Activated CD8-positive, alpha-beta T cell treated with anti-CD3 and anti-CD28 coated beads for 36 hours (primary cell): ENCODE measurements at regions of chr4 and their contacts with region 1.

Region 1: GRCh38 chr4:6873792-6874461 is 35.7 kb upstream of the TBC1D14 start:
- DNase-seq: peak; percentile 90
- ATAC-seq: peak; percentile 94
- H3K4me3 Mint-ChIP-seq: no peak overlapping the region
- H3K27ac Mint-ChIP-seq: peak overlapping the region; percentile 46
- H3K4me1 Mint-ChIP-seq: no peaks in the 10 kb centered on the region
- H3K27me3 Mint-ChIP-seq: no peaks in the 10 kb centered on the region
- CTCF ChIP-seq: peak; percentile 87

Region 2: GRCh38 chr4:6673660-6674499 is 200.0 kb before region 1 on chr4:
- CTCF ChIA-PET with region 1: interaction called, 39 read pairs
- POLR2A ChIA-PET with region 1: interaction called, 3 read pairs
- intact Hi-C with region 1: no loop called
- DNase-seq: peak; percentile 95
- ATAC-seq: peak; percentile 81
- H3K4me3 Mint-ChIP-seq: peak overlapping the region; percentile 90
- H3K27ac Mint-ChIP-seq: peak overlapping the region; percentile 99
- H3K4me1 Mint-ChIP-seq: peaks cover 42% of the 10 kb centered on the region
- H3K27me3 Mint-ChIP-seq: no peaks in the 10 kb centered on the region
- CTCF ChIP-seq: no peak

Region 3: GRCh38 chr4:6727081-6727942 is 146.6 kb before region 1 on chr4:
- CTCF ChIA-PET with region 1: interaction called, 205 read pairs
- POLR2A ChIA-PET with region 1: no interaction called
- intact Hi-C with region 1: loop called (anchors 2 kb)
- DNase-seq: no peak
- ATAC-seq: no peak
- H3K4me3 Mint-ChIP-seq: no peak overlapping the region
- H3K27ac Mint-ChIP-seq: peak overlapping the region; percentile 28
- H3K4me1 Mint-ChIP-seq: peaks cover 5% of the 10 kb centered on the region
- H3K27me3 Mint-ChIP-seq: no peaks in the 10 kb centered on the region
- CTCF ChIP-seq: no peak

Region 4: GRCh38 chr4:6768539-6768905 is 105.4 kb before region 1 on chr4:
- CTCF ChIA-PET with region 1: interaction called, 13 read pairs
- POLR2A ChIA-PET with region 1: no interaction called
- intact Hi-C with region 1: no loop called
- DNase-seq: no peak
- ATAC-seq: no peak
- H3K4me3 Mint-ChIP-seq: no peak overlapping the region
- H3K27ac Mint-ChIP-seq: peak overlapping the region; percentile 41
- H3K4me1 Mint-ChIP-seq: peaks cover 30% of the 10 kb centered on the region
- H3K27me3 Mint-ChIP-seq: no peaks in the 10 kb centered on the region
- CTCF ChIP-seq: no peak

Region 5: GRCh38 chr4:6806924-6807636 is 66.8 kb before region 1 on chr4:
- CTCF ChIA-PET with region 1: interaction called, 11 read pairs
- POLR2A ChIA-PET with region 1: no interaction called
- intact Hi-C with region 1: no loop called
- DNase-seq: no peak
- ATAC-seq: no peak
- H3K4me3 Mint-ChIP-seq: no peak overlapping the region
- H3K27ac Mint-ChIP-seq: no peak overlapping the region
- H3K4me1 Mint-ChIP-seq: peaks cover 24% of the 10 kb centered on the region
- H3K27me3 Mint-ChIP-seq: no peaks in the 10 kb centered on the region
- CTCF ChIP-seq: no peak

Region 6: DNA sequence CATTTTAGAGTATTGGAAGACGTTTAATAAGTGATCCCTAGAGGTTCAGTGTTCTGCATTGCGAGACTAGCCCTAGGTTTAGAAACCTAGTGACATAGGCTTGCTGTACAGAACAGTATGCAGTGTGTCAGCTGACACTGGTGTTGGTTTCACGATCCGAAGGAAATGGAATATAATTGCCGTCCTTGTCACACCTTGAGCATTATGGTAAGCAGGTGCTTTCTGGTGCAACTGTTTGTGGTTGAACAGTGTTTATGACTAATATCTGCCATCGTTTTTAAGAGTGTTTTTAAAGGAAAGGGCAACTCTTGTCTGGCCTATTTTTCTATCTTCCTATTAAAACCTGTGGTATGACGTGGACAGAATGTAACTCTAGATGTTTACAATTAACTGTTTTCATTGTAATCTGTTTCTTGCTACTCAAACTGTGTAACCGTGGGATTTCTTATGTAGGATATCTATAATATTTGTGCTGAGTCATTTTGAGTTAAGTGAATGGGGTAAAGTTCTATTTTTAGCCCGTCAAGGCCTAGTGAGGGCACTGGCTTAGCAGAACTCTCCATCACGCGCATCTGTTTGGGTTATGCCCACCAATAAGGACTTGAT is 18.1 kb before region 1 on chr4:
- CTCF ChIA-PET with region 1: interaction called, 21 read pairs
- POLR2A ChIA-PET with region 1: interaction called, 3 read pairs
- intact Hi-C with region 1: no loop called
- DNase-seq: peak; percentile 64
- ATAC-seq: peak; percentile 97
- H3K4me3 Mint-ChIP-seq: peak overlapping the region; percentile 25
- H3K27ac Mint-ChIP-seq: peak overlapping the region; percentile 92
- H3K4me1 Mint-ChIP-seq: peaks cover 29% of the 10 kb centered on the region
- H3K27me3 Mint-ChIP-seq: no peaks in the 10 kb centered on the region
- CTCF ChIP-seq: no peak

Region 7: DNA sequence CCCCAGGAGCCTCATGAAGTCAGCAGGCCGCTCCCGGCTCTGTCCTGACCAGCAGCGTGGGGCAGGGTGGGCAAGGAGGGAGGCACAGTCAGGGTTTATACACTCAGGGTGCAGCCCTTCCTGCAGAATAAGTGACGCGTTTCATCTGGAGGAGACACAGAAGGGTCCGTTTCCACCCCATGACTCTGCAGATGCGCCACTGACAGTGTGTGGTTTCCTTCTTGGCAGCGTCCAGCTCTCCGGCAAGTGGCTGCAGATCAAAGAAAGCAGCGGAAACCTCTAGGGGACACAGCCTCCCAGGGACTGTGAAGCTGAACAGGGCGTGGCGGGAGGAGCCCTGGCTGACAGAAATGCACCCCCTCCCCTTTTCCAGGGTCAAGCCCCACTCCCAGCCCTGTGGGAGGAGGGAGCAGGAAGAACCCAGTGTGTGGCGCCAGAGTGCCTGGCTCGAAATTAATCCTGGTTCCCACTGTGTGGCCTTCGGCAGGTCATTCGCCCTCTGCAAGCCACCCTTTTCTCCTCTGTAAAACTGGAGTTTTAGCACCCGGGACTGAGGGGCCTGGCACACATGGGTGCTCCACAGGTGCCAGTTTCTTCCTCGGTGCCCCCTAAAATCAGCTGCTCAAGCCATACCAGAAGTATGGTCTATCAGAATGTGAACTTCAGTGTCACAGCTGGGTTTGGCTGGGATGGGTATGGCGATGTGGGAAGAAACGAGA is 18.4 kb after region 1 on chr4:
- CTCF ChIA-PET with region 1: interaction called, 58 read pairs
- POLR2A ChIA-PET with region 1: no interaction called
- intact Hi-C with region 1: no loop called
- DNase-seq: peak; percentile 66
- ATAC-seq: peak; percentile 84
- H3K4me3 Mint-ChIP-seq: no peak overlapping the region
- H3K27ac Mint-ChIP-seq: peak overlapping the region; percentile 71
- H3K4me1 Mint-ChIP-seq: peaks cover 23% of the 10 kb centered on the region
- H3K27me3 Mint-ChIP-seq: no peaks in the 10 kb centered on the region
- CTCF ChIP-seq: no peak